ENCODE measurements at regions of chr2 and their contacts with region 1.

Region 1: GRCh38 chr2:238216651-238217184 is 13.2 kb upstream of the ILKAP start:
- DNase-seq: no peak
- ATAC-seq: peak in 7 of 8 donors; percentile 56 to 95 (median 78)
- H3K4me3 ChIP-seq: no peak overlapping the region
- H3K27ac ChIP-seq: peak overlapping the region in 5 of 10 donors; percentile 14 to 44 (median 31)
- H3K4me1 ChIP-seq: peaks cover 0 to 6% (median 0%) of the 10 kb centered on the region in 9 donors
- H3K27me3 ChIP-seq: peaks cover 0 to 7% (median 0%) of the 10 kb centered on the region in 7 donors
- CTCF ChIP-seq: no peak

Region 2: GRCh38 chr2:237895544-237896506 is 320.9 kb before region 1 on chr2:
- intact Hi-C with region 1: no loop called
- DNase-seq: peak; percentile 71 to 73
- ATAC-seq: peak; percentile 74 to 92 (median 84)
- H3K4me3 ChIP-seq: no peak overlapping the region
- H3K27ac ChIP-seq: peak overlapping the region; percentile 84 to 97 (median 92)
- H3K4me1 ChIP-seq: peaks cover 20 to 75% (median 62%) of the 10 kb centered on the region in 9 donors
- H3K27me3 ChIP-seq: no peaks in the 10 kb centered on the region
- CTCF ChIP-seq: no peak

Region 3: GRCh38 chr2:238167761-238168160 is 49.0 kb before region 1 on chr2:
- intact Hi-C with region 1: loop called in 1 of 10 experiments (anchors 1 kb)
- DNase-seq: no peak
- ATAC-seq: no peak
- H3K4me3 ChIP-seq: no peak overlapping the region
- H3K27ac ChIP-seq: no peak overlapping the region
- H3K4me1 ChIP-seq: peaks cover 0 to 23% (median 11%) of the 10 kb centered on the region in 9 donors
- H3K27me3 ChIP-seq: peaks cover 0 to 25% (median 19%) of the 10 kb centered on the region in 7 donors
- CTCF ChIP-seq: no peak

Measured in heart right ventricle (tissue), 16 donors.